GM10248 (cell line): ENCODE measurements at regions of chr15 and their contacts with region 1.

Region 1: DNA sequence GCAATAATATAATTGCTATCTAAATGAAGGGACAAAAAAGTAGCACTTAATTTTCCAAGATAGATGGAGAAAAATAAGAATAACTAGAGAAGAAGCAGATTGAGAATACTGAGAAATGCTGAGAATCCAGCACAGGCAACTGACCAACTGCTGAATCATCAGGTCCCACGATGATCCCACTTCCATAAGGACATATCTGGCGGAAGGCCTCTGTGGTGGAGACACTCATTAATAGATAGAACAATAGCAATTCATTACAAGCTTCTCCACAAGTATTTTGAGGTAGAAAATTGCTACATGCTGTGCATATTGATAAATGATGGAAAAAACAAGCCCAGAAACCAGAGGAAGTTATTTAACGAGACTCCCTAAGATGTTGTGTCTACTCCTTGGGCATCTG is 105.9 kb downstream of the DUT start:
- DNase-seq: no peak
- CTCF ChIP-seq: no peak

Region 2: DNA sequence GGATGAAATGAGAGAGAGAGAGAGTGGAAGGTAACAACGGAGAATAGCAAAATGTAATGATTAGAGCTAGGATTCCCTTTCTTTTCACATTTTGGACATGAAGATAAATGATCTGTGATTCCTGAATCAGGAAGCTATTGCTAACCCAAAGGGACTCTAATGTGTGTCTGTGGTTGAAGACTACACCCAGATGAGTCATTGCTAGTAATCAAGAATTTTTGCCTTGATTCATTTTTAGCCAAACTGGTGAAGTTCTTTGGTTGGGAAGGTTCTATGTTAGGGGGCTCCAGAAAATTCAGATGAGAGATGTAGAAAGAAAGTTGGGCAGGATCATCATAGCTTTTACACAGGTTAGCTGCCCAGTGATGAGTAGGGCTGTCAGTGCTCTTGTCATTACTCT is 10.5 kb after region 1 on chr15:
- CTCF ChIA-PET with region 1: interaction called, 10 read pairs
- POLR2A ChIA-PET with region 1: no interaction called
- DNase-seq: no peak
- CTCF ChIP-seq: no peak

Region 3: DNA sequence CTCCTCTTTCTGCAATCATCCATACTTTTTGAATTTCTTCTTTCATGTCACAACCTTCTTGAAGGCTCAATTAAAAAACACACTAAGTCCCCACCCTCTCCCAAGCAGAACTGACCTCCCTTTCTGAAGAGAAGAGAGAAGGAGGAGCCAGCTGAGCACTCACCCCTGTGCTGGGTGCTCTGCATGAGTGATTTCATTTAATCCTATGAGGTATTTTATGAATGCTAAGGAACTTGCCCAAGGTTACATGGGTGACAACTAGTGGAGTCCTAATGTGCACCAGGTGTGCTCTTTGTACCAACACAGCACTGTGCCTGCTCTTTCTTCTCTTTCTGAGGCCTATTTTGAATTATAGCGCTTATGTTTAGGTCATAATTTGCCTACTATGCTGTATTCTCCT is 29.6 kb after region 1 on chr15:
- CTCF ChIA-PET with region 1: no interaction called
- POLR2A ChIA-PET with region 1: no interaction called
- DNase-seq: no peak
- CTCF ChIP-seq: no peak